Left ventricle myocardium superior (tissue), 1 donor: ENCODE measurements at regions of chr4 and their contacts with region 1.

Region 1: GRCh38 chr4:52545099-52546069 is 113.7 kb downstream of the USP46 start:
- DNase-seq: peak; percentile 82
- ATAC-seq: peak; percentile 75

Region 2: GRCh38 chr4:52588097-52588782 is 42.9 kb after region 1 on chr4:
- intact Hi-C with region 1: loop called (anchors 5 kb)
- DNase-seq: peak; percentile 54
- ATAC-seq: peak; percentile 55

Region 3: GRCh38 chr4:52659722-52660261 is 114.4 kb after region 1 on chr4:
- intact Hi-C with region 1: loop called (anchors 5 kb)
- DNase-seq: peak; percentile 90
- ATAC-seq: peak; percentile 77

Region 4: DNA sequence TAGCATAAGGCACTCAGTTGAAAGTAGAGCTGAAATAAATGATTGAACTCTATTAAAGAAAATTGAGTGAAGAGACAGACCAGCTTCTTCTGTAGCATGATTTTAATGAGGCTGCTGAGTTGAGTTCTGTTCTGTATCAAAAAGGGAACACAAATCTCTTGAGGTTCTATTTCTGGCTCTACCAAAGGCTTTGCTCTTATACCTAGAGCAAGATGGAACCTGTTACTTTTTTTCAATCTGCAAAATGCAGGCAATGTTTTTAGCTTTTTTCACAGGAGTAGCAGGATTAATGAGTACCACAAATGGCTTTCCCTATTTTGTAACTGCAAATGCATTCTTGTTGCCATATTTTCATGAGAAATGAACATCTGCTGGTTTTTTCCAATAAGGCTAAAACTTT is 210.0 kb after region 1 on chr4:
- intact Hi-C with region 1: no loop called
- DNase-seq: no peak
- ATAC-seq: peak; percentile 44

Region 5: DNA sequence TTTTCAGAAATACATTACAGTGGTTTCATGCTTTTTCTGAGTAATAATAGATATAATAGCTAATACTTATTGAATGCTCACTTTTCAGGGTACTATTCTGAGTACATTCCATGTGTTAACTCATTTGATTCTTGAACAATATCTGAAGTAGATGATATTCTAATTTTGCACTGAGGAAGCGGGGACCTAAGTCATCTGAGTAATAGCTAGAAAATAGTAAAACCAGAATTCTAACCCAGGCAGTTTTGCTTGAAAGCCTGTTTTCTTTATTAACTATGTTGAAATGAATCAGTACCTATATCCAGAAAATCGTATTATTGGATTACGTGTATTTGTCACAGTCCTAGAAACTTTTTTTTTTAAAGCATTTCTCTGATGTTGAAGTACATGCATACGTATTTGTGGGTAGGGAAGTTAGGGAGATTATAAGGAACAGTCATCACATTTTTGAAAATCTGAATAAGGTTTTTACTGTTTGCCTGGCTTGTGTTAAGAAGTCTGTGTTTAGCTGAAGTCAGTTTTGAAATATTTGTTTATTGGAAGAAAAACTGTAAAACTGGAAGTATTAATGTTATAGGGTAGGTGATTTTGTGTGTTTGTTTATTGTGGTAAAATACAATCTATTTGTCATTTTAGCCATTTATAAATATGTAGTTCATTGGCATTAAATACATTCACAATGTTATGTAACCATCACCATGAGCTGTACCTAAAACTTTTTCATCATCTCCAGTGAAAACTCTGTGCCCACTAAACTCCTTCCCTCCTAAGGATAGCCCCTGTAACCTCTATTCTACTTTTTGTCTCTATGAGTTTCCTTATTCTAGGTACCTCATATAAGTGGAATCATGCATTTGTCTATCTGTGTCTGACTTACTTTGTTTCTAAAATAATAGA is 887.4 kb after region 1 on chr4:
- intact Hi-C with region 1: no loop called
- DNase-seq: no peak
- ATAC-seq: no peak